ENCODE measurements at regions of chr2 and their contacts with region 1.

Region 1: DNA sequence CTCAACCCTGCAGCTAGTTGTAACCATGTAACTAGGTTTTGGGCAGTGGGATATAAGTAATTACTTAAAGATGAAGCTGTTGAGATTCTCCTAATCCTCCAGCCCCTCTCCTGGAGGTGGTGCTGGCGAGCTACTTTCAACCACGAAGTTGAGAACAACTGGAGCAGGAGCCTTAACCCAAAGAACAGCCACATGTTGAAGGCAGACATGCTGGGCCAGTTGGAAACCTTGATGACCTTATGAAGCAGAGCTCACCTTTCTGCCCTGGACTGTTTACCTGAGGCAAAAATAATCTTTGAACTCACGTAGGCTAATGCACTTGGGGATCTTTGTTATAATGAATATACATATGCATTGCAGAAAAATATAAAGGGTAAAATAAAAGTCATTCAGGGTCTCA is 89.6 kb upstream of the NPAS2 start:
- DNase-seq: peak; percentile 85
- H3K4me3 Mint-ChIP-seq: no peak overlapping the region
- H3K27ac Mint-ChIP-seq: no peak overlapping the region
- H3K4me1 Mint-ChIP-seq: peaks cover 20% of the 10 kb centered on the region
- H3K27me3 Mint-ChIP-seq: peaks cover 12% of the 10 kb centered on the region
- CTCF ChIP-seq: peak; percentile 77

Region 2: DNA sequence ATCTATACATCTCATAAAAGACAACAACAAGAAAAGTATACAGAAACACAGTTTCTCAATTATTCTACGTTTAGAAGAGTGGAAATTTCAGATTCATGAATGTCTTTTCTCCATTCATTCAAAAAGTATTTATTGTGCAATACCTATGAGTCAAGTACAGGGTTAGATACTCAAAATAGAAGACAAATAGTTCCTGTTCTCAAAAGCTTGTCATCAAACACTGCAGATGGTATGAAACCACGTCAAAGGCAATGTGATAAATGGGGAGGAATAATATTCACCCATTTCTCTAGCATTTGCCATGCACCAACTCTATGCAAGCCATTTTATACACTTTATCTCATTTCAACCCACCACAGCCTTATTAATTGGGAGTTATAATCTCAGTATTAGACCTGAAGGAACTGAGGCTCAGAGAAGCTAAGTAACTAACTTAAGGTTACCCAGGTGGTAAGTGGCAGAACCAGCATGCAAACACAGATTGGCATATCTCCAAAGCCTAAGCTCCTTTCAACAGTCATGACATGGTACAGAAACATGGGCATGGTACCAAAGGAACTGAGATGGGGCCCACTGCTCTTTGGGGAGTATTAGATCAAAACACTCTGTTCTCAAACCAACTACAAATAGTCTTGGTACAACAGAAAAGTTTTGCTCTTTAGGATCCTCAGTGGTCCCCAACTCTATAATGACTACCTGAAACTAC is 22.4 kb after region 1 on chr2:
- CTCF ChIA-PET with region 1: interaction called, 6 read pairs
- POLR2A ChIA-PET with region 1: interaction called, 6 read pairs
- intact Hi-C with region 1: loop called (anchors 1 kb)
- DNase-seq: peak; percentile 83
- H3K4me3 Mint-ChIP-seq: no peak overlapping the region
- H3K27ac Mint-ChIP-seq: peak overlapping the region; percentile 97
- H3K4me1 Mint-ChIP-seq: peaks cover 57% of the 10 kb centered on the region
- H3K27me3 Mint-ChIP-seq: no peaks in the 10 kb centered on the region
- CTCF ChIP-seq: no peak

Region 3: GRCh38 chr2:100786297-100786658 is 55.9 kb after region 1 on chr2:
- CTCF ChIA-PET with region 1: interaction called, 10 read pairs
- POLR2A ChIA-PET with region 1: interaction called, 4 read pairs
- intact Hi-C with region 1: loop called (anchors 1 kb)
- DNase-seq: peak; percentile 91
- H3K4me3 Mint-ChIP-seq: peak overlapping the region; percentile 56
- H3K27ac Mint-ChIP-seq: peak overlapping the region; percentile 21
- H3K4me1 Mint-ChIP-seq: peaks cover 29% of the 10 kb centered on the region
- H3K27me3 Mint-ChIP-seq: no peaks in the 10 kb centered on the region
- CTCF ChIP-seq: no peak

Region 4: DNA sequence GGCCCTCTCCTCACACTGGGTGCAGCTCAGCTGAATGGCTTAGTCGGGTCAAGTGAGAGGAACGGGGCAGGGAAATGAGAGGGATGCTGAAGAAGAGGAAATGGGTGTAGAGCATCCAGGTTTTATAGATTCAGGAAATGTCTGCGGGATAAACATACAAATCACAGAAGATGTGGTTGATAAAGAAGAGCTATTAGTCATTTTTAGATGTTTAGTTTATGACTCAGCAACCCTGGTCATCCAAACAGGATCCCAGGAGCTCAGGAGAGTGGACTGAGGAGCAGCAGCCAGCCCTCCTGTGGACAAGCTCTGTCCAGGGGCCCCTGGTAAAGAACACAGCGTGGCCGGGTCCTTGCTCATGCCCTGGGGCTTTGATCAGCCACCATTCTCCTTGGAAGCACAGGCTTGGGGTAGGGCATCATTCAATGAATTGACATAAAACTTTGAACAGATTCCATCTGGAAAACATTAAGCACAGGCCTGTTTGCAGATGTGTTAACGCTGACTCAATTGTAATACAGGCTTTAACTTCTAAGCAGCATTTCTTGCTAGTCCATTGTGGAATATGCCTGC is 172.6 kb after region 1 on chr2:
- CTCF ChIA-PET with region 1: interaction called, 5 read pairs
- POLR2A ChIA-PET with region 1: interaction called, 6 read pairs
- intact Hi-C with region 1: loop called (anchors 5 kb)
- DNase-seq: peak; percentile 90
- H3K4me3 Mint-ChIP-seq: no peak overlapping the region
- H3K27ac Mint-ChIP-seq: no peak overlapping the region
- H3K4me1 Mint-ChIP-seq: peaks cover 28% of the 10 kb centered on the region
- H3K27me3 Mint-ChIP-seq: no peaks in the 10 kb centered on the region
- CTCF ChIP-seq: no peak

Region 5: DNA sequence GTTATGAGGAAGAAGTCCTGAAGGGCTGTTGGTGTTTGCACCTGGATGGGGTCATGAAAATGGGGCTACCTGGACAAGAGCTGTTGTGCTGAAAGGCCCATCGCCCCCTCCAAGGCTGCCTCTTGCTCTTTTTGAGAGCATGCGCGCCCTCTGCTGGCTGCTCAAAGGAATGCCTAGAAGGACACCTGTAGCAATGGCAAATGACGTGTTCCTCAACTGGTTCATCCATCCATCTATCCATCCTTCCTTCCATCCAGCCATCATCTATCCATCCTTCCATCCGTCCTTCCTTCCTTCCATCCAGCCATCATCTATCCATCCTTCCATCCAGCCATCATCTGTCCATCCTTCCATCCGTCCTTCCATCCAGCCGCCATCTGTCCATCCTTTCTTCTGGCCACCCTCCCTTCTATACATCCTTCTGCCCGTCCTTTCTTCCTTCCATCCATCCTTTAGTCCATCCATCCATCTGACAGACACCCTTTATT is 254.6 kb after region 1 on chr2:
- CTCF ChIA-PET with region 1: interaction called, 33 read pairs
- POLR2A ChIA-PET with region 1: interaction called, 3 read pairs
- intact Hi-C with region 1: loop called (anchors 1 kb)
- DNase-seq: peak; percentile 75
- H3K4me3 Mint-ChIP-seq: no peak overlapping the region
- H3K27ac Mint-ChIP-seq: no peak overlapping the region
- H3K4me1 Mint-ChIP-seq: peaks cover 5% of the 10 kb centered on the region
- H3K27me3 Mint-ChIP-seq: no peaks in the 10 kb centered on the region
- CTCF ChIP-seq: peak; percentile 91

Measured in MCF 10A (cell line).